Thyroid gland (tissue), 4 donors: ENCODE measurements at regions of chr10 and their contacts with region 1.

Region 1: DNA sequence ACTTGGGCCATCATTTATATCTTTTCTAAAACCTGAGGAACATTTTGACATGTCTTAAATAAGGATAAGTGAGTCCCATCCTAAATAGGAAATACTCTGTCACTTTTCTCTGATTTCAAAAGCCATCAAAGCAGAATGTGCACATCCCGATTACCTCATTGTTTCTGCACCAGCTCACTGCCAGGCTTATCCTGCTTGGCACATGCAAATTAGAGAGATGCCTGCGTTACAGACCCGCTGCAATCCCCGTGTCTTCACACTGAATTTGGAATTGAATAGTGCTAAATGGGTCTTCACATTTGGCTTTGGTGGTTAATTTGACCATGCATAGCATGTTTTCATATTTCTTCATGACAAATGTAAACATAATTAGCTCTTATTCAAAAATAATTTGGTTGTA is 279.5 kb downstream of the WDR37 start:
- DNase-seq: no peak
- H3K4me3 ChIP-seq: no peak overlapping the region
- H3K27ac ChIP-seq: no peak overlapping the region
- H3K4me1 ChIP-seq: no peaks in the 10 kb centered on the region
- H3K27me3 ChIP-seq: no peaks in the 10 kb centered on the region
- CTCF ChIP-seq: no peak
- POLR2A ChIP-seq: no peak

Region 2: DNA sequence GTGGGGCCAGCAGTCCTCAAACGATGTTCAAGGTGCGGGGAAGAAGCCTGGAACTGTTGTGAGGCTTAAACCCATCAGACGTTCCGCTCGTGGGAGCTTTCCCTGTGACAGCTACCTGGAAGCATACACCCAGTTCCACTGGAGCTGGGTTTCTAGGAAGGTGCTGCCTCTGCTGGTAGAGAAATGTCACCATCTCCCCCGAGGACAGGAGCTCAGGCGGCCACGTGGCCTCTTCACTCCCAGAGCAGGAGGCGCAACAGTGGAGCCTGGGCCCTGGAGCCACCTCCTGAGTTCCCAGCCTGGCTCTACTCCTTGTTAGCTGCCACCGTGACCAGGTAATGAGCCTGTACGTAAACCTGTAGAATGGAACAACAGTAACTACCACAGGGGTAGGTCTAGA is 245.5 kb after region 1 on chr10:
- intact Hi-C with region 1: loop called (anchors 10 kb)
- DNase-seq: no peak
- H3K4me3 ChIP-seq: no peak overlapping the region
- H3K27ac ChIP-seq: no peak overlapping the region
- H3K4me1 ChIP-seq: no peaks in the 10 kb centered on the region
- H3K27me3 ChIP-seq: no peaks in the 10 kb centered on the region
- CTCF ChIP-seq: no peak
- POLR2A ChIP-seq: no peak